ENCODE measurements at regions of chr2 and their contacts with region 1.

Region 1: GRCh38 chr2:71510196-71510807 is 56.9 kb downstream of the DYSF start:
- DNase-seq: peak; percentile 55 to 75 (median 69)
- H3K4me3 ChIP-seq: no peak overlapping the region
- H3K27ac ChIP-seq: no peak overlapping the region
- H3K4me1 ChIP-seq: no peaks in the 10 kb centered on the region
- H3K27me3 ChIP-seq: peaks cover 0 to 3% (median 0%) of the 10 kb centered on the region in 5 experiments

Region 2: DNA sequence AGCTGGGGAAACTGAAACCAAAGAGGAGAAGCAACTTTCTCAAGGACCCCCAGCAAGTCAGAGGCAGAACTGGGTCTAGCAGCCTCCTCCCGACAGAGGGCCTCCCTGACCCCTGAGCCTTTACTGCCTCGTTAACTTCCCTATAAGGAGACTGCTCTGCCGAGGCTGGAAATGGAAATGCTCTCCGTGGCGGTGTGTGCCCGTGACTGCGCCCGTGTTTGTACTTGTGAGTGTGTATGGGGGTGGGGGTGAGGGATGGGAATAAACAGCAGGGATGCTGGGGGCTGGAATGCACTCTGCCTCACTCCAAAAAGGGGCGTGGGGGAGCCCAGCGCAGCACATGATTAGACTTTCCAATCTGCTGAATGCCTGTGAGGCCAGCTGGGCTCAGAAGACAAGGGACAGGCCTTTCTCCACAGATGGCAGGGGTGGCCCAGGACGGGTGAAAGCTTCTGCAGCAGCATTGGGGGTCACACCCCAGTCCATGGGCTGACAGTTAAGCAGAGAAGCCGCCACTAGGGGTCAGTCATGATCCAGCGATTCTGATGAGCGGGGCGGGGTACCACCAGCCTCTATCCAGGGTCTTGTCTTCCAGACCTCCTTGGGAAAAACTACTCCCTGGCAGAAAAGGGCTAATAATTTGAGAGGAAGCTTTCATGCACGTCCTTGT is 353.0 kb before region 1 on chr2:
- CTCF ChIA-PET with region 1: interaction called, 20 read pairs
- POLR2A ChIA-PET with region 1: no interaction called
- DNase-seq: peak; percentile 58 to 67 (median 64)
- H3K4me3 ChIP-seq: peak overlapping the region in 3 of 7 experiments; percentile 11 to 55 (median 30)
- H3K27ac ChIP-seq: no peak overlapping the region
- H3K4me1 ChIP-seq: peaks cover 0 to 9% (median 4%) of the 10 kb centered on the region in 4 experiments
- H3K27me3 ChIP-seq: peaks cover 0 to 6% (median 0%) of the 10 kb centered on the region in 5 experiments

Region 3: DNA sequence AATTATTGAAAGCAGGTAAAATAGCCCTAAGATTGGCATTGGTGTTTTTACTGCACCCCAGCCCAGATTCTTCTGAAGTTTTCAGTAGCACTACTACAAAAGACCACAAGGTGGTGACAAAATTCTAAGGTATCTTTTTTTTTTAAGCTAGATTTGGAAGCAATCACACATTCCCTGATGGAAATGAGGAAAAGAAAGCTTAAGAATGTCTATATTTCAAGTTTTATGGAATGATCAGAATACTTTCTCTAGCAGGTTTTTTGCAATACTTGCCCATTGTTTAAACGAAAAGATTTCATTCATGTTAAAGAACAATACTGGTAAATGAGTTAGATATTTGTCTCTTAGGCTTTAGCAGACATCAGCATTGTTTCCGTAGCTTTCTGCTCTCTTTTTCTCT is 210.8 kb before region 1 on chr2:
- CTCF ChIA-PET with region 1: interaction called, 71 read pairs
- POLR2A ChIA-PET with region 1: interaction called, 3 read pairs
- DNase-seq: peak; percentile 34 to 56 (median 42)
- H3K4me3 ChIP-seq: no peak overlapping the region
- H3K27ac ChIP-seq: no peak overlapping the region
- H3K4me1 ChIP-seq: no peaks in the 10 kb centered on the region
- H3K27me3 ChIP-seq: no peaks in the 10 kb centered on the region

Region 4: DNA sequence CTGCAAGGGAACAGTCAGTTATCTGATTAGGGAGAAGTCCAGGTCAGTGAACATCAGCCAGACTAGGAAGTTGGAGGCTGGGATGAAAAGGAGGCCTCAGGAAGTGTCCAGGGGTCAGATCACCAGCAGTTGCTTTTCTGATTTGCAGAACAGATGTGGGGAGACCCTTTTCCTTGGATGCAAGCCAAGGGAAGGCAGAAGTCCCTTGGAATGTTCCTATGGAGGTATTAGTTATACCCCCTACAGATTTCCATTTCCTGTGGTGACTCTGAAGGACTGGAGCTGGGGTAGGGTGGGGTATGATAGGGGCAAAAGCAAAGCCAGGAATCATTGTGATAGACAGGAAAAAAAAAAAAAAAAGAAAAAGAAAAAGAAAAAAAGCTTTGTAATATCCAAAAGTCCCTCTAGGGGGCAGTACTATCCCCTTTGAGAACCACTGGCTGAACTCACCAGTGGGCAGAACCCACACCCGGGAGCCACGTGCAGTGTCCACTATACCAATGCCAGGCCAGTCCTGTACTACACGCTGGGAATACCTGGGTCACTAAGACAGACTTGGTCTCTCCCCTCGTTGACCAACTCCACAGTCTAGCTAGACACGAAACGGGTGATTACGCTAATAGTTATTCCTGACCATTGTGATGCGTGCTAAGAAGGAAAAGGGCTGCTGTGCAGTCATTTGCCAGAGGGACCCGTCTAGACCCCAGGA is 49.6 kb before region 1 on chr2:
- CTCF ChIA-PET with region 1: interaction called, 15 read pairs
- POLR2A ChIA-PET with region 1: no interaction called
- DNase-seq: no peak
- H3K4me3 ChIP-seq: no peak overlapping the region
- H3K27ac ChIP-seq: no peak overlapping the region
- H3K4me1 ChIP-seq: peaks cover 0 to 8% (median 2%) of the 10 kb centered on the region in 4 experiments
- H3K27me3 ChIP-seq: peaks cover 0 to 37% (median 16%) of the 10 kb centered on the region in 5 experiments

Measured in common myeloid progenitor, CD34-positive (primary cell).